PC-9 (cell line): ENCODE measurements at regions of chr1 and their contacts with region 1.

Region 1: GRCh38 chr1:58783993-58784757 is at the start of gene JUN:
- DNase-seq: peak; percentile 96 to 99
- H3K4me3 ChIP-seq: peak within 1 kb of the TSS; percentile 94
- H3K27ac ChIP-seq: peak within 1 kb of the TSS; percentile 99
- H3K4me1 ChIP-seq: peaks cover 33% of the 10 kb centered on the region
- H3K27me3 ChIP-seq: no peaks in the 10 kb centered on the region
- CTCF ChIP-seq: no peak
- total RNA-seq, gene JUN: 74.7 and 93.7 TPM in 2 replicates

Region 2: DNA sequence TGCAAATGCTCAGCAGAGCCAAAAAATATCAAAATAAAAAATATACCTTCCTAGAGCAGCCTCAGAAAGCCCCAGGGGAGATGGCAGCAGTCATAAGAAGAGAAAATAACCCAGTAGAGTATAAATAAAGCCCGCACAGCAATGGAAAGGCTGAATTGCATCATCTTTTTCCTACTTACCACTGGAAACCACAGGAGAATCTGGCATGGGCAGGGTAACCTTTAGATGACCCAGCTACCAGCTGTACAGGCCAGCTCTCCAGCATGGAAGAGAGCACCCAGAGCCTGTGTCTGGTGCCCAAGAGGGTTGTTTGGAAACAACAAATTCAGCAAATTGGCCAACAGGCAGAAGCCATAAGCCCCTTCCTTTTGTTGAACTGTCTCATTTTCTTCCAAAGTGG is 490.8 kb before region 1 on chr1:
- CTCF ChIA-PET with region 1: no interaction called
- POLR2A ChIA-PET with region 1: no interaction called
- intact Hi-C with region 1: no loop called
- DNase-seq: no peak
- H3K4me3 ChIP-seq: no peak overlapping the region
- H3K27ac ChIP-seq: no peak overlapping the region
- H3K4me1 ChIP-seq: no peaks in the 10 kb centered on the region
- H3K27me3 ChIP-seq: no peaks in the 10 kb centered on the region
- CTCF ChIP-seq: no peak

Region 3: DNA sequence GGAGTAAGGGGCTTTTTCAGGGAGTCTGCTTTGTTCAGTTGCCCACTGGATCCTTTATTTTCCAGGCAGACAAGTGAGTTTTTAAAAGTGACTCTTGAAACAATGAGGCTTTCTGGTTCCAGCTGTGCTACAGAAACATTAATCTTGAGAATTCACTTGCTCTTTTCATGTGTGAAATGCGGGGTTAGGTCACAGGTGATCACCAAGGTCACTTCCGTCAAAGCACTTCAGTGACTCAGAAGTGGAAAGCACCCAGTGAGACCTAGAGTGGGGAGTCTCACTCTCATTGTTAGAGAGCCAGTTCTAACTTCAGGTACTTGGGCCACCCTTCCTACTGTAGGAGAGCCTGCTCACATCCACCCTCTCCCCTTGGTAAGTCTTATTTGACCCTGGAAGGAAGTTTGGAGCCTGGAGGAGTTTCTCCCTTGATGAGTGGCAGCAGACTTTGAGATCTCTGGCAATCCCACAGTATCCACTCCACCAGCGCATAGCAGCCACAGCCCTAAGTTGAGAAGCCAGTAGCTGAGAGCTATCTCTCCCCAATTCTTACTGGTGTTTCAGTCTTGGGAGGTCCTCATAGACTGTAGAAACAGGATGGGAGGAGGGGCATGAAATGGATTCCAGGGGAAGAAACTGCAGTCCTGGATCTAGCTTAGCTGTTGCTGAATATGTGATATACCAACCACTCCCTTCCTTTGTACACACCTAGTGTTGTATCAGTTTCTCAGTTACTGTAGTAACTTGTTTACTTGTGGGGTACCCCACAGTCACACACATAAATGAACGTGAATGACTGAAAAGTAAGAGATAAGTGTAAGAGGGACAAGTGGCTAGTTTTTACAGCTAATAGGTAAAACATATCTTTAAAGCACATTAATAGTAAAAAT is 210.2 kb before region 1 on chr1:
- CTCF ChIA-PET with region 1: no interaction called
- POLR2A ChIA-PET with region 1: no interaction called
- intact Hi-C with region 1: loop called (anchors 1 kb)
- DNase-seq: peak; percentile 62 to 88
- H3K4me3 ChIP-seq: peak overlapping the region; percentile 97
- H3K27ac ChIP-seq: peak overlapping the region; percentile 99
- H3K4me1 ChIP-seq: peaks cover 61% of the 10 kb centered on the region
- H3K27me3 ChIP-seq: no peaks in the 10 kb centered on the region
- CTCF ChIP-seq: no peak

Region 4: GRCh38 chr1:58874757-58875755 is 90.9 kb after region 1 on chr1:
- CTCF ChIA-PET with region 1: no interaction called
- POLR2A ChIA-PET with region 1: interaction called, 9 read pairs
- intact Hi-C with region 1: loop called (anchors 1 kb)
- DNase-seq: peak; percentile 84 to 98
- H3K4me3 ChIP-seq: no peak overlapping the region; the same call in 1 of the 2 replicates
- H3K27ac ChIP-seq: peak overlapping the region; percentile 92
- H3K4me1 ChIP-seq: peaks cover 48% of the 10 kb centered on the region
- H3K27me3 ChIP-seq: no peaks in the 10 kb centered on the region
- CTCF ChIP-seq: no peak

Region 5: DNA sequence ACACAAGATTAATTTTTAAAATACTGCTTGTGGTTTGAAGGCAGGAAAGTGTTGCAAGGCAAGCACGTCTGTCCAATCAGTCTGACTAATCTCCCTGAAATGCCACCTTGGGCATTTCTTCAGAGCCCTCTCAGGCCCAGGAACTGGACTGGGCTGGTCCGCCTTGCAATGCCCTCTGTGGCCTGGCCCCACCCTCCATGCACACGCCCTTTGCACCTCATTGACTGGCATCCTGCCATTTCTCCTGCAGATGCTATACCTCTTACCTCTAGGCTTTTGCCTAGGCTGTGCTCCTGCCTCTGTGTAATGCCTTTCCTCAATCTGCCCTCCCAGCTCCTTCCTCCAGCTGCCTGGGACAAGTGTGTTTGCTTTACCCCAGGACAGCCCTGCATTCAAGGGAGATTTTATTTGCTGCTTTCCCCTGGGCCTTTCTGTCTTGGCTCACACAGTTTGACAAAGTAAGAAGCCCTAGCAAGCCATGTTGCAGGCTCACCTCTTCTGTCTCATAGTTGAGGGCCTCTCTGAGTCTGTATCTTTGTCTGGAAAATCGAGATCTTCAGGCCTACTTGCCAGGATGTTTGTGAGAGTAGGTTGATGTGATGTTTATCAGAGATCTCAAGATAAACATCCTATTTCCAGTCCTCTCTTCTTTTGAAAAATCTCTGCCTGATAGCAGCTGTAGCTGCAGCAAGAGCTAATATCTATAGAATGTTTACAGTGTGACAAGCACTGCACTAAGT is 148.9 kb after region 1 on chr1:
- CTCF ChIA-PET with region 1: no interaction called
- POLR2A ChIA-PET with region 1: interaction called, 14 read pairs
- intact Hi-C with region 1: loop called (anchors 1 kb)
- DNase-seq: peak; percentile 97 to 98
- H3K4me3 ChIP-seq: peak overlapping the region; percentile 13; the same call in 1 of the 2 replicates
- H3K27ac ChIP-seq: peak overlapping the region; percentile 94
- H3K4me1 ChIP-seq: peaks cover 76% of the 10 kb centered on the region
- H3K27me3 ChIP-seq: no peaks in the 10 kb centered on the region
- CTCF ChIP-seq: no peak

Region 6: GRCh38 chr1:59071289-59071688 is 287.1 kb after region 1 on chr1:
- CTCF ChIA-PET with region 1: no interaction called
- POLR2A ChIA-PET with region 1: interaction called, 10 read pairs
- intact Hi-C with region 1: no loop called
- DNase-seq: no peak
- H3K4me3 ChIP-seq: no peak overlapping the region
- H3K27ac ChIP-seq: no peak overlapping the region
- H3K4me1 ChIP-seq: no peaks in the 10 kb centered on the region
- H3K27me3 ChIP-seq: no peaks in the 10 kb centered on the region
- CTCF ChIP-seq: no peak

Region 7: GRCh38 chr1:59237900-59238299 is 453.7 kb after region 1 on chr1:
- CTCF ChIA-PET with region 1: no interaction called
- POLR2A ChIA-PET with region 1: no interaction called
- intact Hi-C with region 1: no loop called
- DNase-seq: no peak
- H3K4me3 ChIP-seq: no peak overlapping the region
- H3K27ac ChIP-seq: no peak overlapping the region
- H3K4me1 ChIP-seq: no peaks in the 10 kb centered on the region
- H3K27me3 ChIP-seq: no peaks in the 10 kb centered on the region
- CTCF ChIP-seq: no peak

Region 8: GRCh38 chr1:59422921-59423575 is 638.9 kb after region 1 on chr1:
- CTCF ChIA-PET with region 1: no interaction called
- POLR2A ChIA-PET with region 1: interaction called, 7 read pairs
- intact Hi-C with region 1: loop called (anchors 1 kb)
- DNase-seq: peak in 1 of 2 experiments; percentile 36
- H3K4me3 ChIP-seq: no peak overlapping the region
- H3K27ac ChIP-seq: no peak overlapping the region
- H3K4me1 ChIP-seq: peaks cover 25% of the 10 kb centered on the region
- H3K27me3 ChIP-seq: no peaks in the 10 kb centered on the region
- CTCF ChIP-seq: no peak

Region 9: DNA sequence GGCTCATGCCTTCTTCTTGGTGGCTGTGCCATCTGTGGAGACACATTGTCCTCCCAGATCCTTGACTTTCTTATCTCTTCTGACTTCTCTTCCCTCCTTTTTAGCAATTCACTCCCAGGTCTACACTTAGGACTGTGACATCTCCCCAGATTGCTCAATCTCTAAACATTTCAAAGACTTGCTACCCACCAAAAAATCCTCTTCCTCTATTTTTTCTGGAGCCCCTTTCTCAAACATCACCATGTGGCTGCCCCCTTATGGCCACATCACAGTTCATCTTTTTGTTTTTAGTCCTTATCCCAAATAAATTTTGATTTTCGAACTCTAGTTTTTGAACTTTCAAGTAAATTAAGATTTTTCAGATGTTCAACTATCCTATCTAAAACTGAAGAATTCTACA is 881.9 kb after region 1 on chr1:
- CTCF ChIA-PET with region 1: no interaction called
- POLR2A ChIA-PET with region 1: no interaction called
- intact Hi-C with region 1: no loop called
- DNase-seq: no peak
- H3K4me3 ChIP-seq: no peak overlapping the region
- H3K27ac ChIP-seq: no peak overlapping the region
- H3K4me1 ChIP-seq: no peaks in the 10 kb centered on the region
- H3K27me3 ChIP-seq: no peaks in the 10 kb centered on the region
- CTCF ChIP-seq: no peak

Region 10: GRCh38 chr1:59699227-59699847 is 915.2 kb after region 1 on chr1:
- CTCF ChIA-PET with region 1: no interaction called
- POLR2A ChIA-PET with region 1: interaction called, 3 read pairs
- intact Hi-C with region 1: loop called (anchors 1 kb)
- DNase-seq: peak in 1 of 2 experiments; percentile 8
- H3K4me3 ChIP-seq: no peak overlapping the region
- H3K27ac ChIP-seq: no peak overlapping the region
- H3K4me1 ChIP-seq: no peaks in the 10 kb centered on the region; the same call in 1 of the 2 replicates
- H3K27me3 ChIP-seq: no peaks in the 10 kb centered on the region
- CTCF ChIP-seq: peak; percentile 96